ENCODE measurements at regions of chr4 and their contacts with region 1.

Region 1: GRCh38 chr4:118034053-118034785 is at the start of gene NDST3:
- DNase-seq: peak; percentile 54
- ATAC-seq: peak; percentile 53
- H3K4me3 Mint-ChIP-seq: peak within 1 kb of the TSS; percentile 49
- H3K27ac Mint-ChIP-seq: no peak within 1 kb of the TSS
- H3K4me1 Mint-ChIP-seq: peaks cover 7% of the 10 kb centered on the region
- H3K27me3 Mint-ChIP-seq: peaks cover 21% of the 10 kb centered on the region
- total RNA-seq, gene NDST3: not detected

Region 2: DNA sequence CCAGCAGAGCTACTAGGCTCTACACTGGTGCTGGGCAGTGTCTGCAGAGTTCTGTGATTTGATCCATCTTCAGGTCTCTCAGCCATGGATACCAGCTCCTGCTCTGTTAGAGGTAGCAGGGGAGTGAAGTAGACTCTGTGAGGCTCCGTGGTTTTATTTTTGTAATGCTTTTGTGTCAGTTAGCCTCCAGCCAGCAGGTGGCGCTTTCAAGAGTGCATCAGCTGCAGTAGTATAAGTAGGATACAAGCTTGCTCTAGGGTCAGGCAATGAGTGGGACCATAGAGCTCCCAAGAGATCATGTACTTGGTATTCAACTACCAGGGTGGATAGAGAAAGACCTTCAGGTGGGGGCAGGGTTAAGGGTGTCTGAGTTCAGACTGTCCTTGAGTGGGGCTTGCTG is 586.3 kb before region 1 on chr4:
- CTCF ChIA-PET with region 1: interaction called, 4 read pairs
- POLR2A ChIA-PET with region 1: no interaction called
- intact Hi-C with region 1: loop called in 1 of 2 experiments (anchors 10 kb)
- DNase-seq: peak; percentile 60
- ATAC-seq: peak; percentile 33
- H3K4me3 Mint-ChIP-seq: no peak overlapping the region
- H3K27ac Mint-ChIP-seq: no peak overlapping the region
- H3K4me1 Mint-ChIP-seq: no peaks in the 10 kb centered on the region
- H3K27me3 Mint-ChIP-seq: peaks cover 2% of the 10 kb centered on the region

Measured in activated CD4-positive, alpha-beta T cell treated with anti-CD3 and anti-CD28 coated beads for 36 hours (primary cell).